Gastrocnemius medialis (tissue), 4 donors: ENCODE measurements at regions of chr5 and their contacts with region 1.

Region 1: DNA sequence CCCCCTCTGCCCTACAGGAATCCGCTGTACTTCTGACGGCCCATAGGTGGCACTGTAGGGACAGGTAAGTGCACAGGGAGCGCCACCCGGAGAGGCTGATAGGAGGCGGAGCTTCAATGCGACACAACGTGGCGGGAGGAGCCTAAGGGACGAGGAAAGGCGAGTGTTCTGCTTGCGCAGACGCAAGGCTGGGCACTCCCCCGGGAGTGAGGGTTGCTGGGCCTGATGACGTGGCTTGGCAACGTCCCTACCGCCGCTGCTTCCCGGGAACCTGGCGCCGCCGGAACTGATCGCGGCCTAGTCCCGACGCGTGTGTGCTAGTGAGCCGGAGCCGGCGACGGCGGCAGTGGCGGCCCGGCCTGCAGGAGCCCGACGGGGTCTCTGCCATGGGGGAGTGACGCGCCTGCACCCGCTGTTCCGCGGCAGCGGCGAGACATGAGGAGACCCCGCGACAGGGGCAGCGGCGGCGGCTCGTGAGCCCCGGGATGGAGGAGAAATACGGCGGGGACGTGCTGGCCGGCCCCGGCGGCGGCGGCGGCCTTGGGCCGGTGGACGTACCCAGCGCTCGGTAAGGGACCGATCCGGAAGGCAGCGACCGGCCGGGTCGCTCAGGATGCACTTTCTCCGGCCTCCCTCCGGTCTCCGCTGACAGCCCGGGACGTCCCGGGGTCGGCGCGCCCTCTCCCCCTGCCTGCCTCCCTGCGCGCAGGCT is at the start of gene SLC30A5:
- DNase-seq: peak; percentile 99 to 100
- ATAC-seq: peak; percentile 99
- H3K4me3 ChIP-seq: peak within 1 kb of the TSS; percentile 83 to 90 (median 88)
- H3K27ac ChIP-seq: peak within 1 kb of the TSS; percentile 91 to 95 (median 92)
- H3K4me1 ChIP-seq: peaks cover 15 to 16% of the 10 kb centered on the region in 2 donors
- H3K27me3 ChIP-seq: no peaks in the 10 kb centered on the region
- CTCF ChIP-seq: peak; percentile 87 to 95 (median 91)
- POLR2A ChIP-seq: peak; percentile 72 to 82
- total RNA-seq, gene SLC30A5: 14.6 to 35.3 (median 24.5) TPM

Region 2: DNA sequence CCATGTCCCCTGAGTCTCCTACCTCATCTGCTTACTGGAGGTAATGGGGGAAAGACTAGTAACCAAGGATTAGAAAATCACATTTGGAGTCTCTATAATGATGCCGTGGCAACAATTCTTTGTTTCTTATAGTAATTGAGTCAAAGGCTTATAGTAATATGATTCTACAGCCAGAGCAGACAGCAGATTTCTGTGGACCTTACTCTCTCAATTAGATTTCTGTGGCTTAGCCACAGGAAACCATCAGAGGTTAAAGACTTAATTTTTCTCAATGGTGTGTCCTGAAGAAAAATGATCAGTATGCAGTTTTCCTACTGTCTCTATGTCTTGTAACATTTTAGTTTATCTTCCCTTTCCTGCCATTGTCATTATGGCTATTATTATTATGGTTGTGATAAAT is 1838.0 kb before region 1 on chr5:
- in situ Hi-C with region 1: no loop called
- intact Hi-C with region 1: loop called (anchors 10 kb)
- DNase-seq: no peak
- ATAC-seq: no peak
- H3K4me3 ChIP-seq: no peak overlapping the region
- H3K27ac ChIP-seq: no peak overlapping the region
- H3K4me1 ChIP-seq: peaks cover 3 to 4% of the 10 kb centered on the region in 2 donors
- H3K27me3 ChIP-seq: no peaks in the 10 kb centered on the region
- CTCF ChIP-seq: no peak
- POLR2A ChIP-seq: no peak

Region 3: GRCh38 chr5:69166686-69167492 is 73.0 kb after region 1 on chr5 and contains the start of gene CCNB1:
- in situ Hi-C with region 1: loop called in 2 of 4 experiments (anchors 10 kb)
- intact Hi-C with region 1: loop called (anchors 2 kb)
- DNase-seq: peak; percentile 92 to 96
- ATAC-seq: peak; percentile 100
- H3K4me3 ChIP-seq: peak within 1 kb of the TSS; percentile 65 to 85 (median 74)
- H3K27ac ChIP-seq: peak within 1 kb of the TSS; percentile 31 to 53 (median 38)
- H3K4me1 ChIP-seq: peaks cover 7 to 8% of the 10 kb centered on the region in 2 donors
- H3K27me3 ChIP-seq: no peaks in the 10 kb centered on the region
- CTCF ChIP-seq: no peak
- POLR2A ChIP-seq: no peak
- total RNA-seq, gene CCNB1: 0.84 to 11.1 (median 2.7) TPM

Region 4: DNA sequence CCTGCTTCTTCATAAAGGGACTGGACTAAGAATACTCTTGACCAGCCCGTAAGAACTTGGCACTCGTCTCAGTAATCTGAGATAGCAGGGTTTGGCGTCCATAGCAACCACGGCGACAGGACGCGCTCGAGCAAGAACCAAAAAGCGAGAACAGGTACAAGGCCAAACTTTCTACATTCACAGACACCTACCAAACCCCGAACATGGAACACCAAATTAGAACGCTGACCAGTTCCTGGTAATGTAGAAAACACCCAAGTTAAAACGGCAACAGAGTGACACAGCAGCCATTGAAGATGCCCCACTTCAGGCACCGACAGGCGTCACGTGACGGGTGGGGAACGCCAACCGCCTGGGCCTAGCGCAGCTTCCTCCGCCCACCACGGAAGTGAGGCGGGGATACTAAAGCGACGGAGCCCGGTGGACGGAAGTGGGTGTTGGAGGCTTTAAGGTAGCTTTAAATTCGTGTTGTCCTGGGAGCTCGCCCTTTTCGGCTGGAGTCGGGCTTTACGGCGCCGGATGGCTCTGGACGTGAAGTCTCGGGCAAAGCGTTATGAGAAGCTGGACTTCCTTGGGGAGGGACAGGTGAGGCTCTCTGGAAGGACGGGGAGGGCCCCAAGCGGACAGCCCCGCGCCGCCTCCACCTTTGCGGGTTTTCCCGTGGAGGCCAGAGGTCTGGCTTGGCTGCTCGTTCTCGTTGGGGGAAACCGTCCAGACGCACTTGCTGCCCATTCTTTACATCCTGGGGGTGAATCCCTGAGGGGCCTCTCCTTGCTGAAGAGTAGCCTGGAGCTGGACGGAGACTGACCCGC is 140.7 kb after region 1 on chr5 and contains the start of gene CDK7:
- in situ Hi-C with region 1: no loop called
- intact Hi-C with region 1: loop called (anchors 5 kb)
- DNase-seq: peak; percentile 94 to 95
- ATAC-seq: peak; percentile 98 to 99
- H3K4me3 ChIP-seq: peak within 1 kb of the TSS; percentile 68 to 92 (median 76)
- H3K27ac ChIP-seq: peak within 1 kb of the TSS; percentile 75 to 94 (median 86)
- H3K4me1 ChIP-seq: peaks cover 21 to 25% of the 10 kb centered on the region in 2 donors
- H3K27me3 ChIP-seq: no peaks in the 10 kb centered on the region
- CTCF ChIP-seq: peak in 2 of 5 experiments; percentile 12
- POLR2A ChIP-seq: peak; percentile 57 to 58
- total RNA-seq, gene CDK7: 23.4 to 31.6 (median 28.0) TPM

Region 5: GRCh38 chr5:69369369-69370121 is 275.6 kb after region 1 on chr5 and contains the starts of genes AK6, RAD17 and TAF9:
- in situ Hi-C with region 1: loop called in 3 of 4 experiments (anchors 10 to 25 kb)
- intact Hi-C with region 1: loop called (anchors 1 kb)
- DNase-seq: peak; percentile 89
- ATAC-seq: peak; percentile 96 to 97
- H3K4me3 ChIP-seq: peak within 1 kb of the TSS; percentile 85 to 90 (median 89)
- H3K27ac ChIP-seq: peak within 1 kb of the TSS; percentile 95 to 99 (median 98)
- H3K4me1 ChIP-seq: peaks cover 30 to 32% of the 10 kb centered on the region in 2 donors
- H3K27me3 ChIP-seq: no peaks in the 10 kb centered on the region
- CTCF ChIP-seq: no peak
- POLR2A ChIP-seq: peak; percentile 80 to 81
- total RNA-seq, gene AK6: 24.4 to 49.3 (median 32.5) TPM
- total RNA-seq, gene RAD17: 7.3 to 18.3 (median 11.9) TPM
- total RNA-seq, gene TAF9: 35.3 to 58.6 (median 45.6) TPM